ENCODE measurements at regions of chr1 and their contacts with region 1.

Region 1: GRCh38 chr1:65235867-65236805 is 73.2 kb upstream of the DNAJC6 start:
- DNase-seq: no peak
- ATAC-seq: peak; percentile 41
- H3K4me3 ChIP-seq: no peak overlapping the region
- H3K27ac ChIP-seq: no peak overlapping the region
- H3K4me1 ChIP-seq: no peaks in the 10 kb centered on the region
- H3K27me3 ChIP-seq: no peaks in the 10 kb centered on the region
- CTCF ChIP-seq: peak; percentile 41 to 63 (median 56); a peak in 5 of 6 replicates
- EP300 ChIP-seq: no peak
- POLR2A ChIP-seq: no peak
- RAD21 ChIP-seq: peak; percentile 72

Region 2: DNA sequence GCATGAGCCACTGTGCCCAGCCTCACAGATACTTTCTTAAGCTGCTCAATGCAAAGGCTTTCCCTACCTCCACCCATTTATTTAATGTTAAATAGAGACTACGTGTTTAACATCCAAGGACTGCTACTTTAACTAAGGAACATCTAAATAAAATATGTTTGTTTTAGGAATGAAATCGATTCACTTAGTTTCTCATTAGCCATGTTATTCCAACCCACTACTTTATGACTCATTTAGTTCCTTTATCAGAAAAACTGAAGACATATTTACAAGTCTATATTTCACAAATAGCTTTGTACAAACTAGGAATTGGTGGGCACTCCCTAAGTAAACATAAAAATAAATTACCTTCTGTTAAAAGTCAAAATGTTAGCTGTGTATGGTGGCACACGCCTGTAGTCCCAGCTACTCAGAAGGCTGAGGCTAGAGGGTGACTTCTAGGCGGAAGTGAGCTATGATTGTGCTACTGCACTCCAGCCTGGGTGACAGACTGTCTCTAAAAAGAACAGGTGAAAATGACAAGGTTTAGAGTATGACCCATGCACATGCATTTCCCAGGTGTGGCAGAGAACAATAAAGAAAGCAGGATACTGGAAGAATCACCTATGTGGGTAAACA is 128.0 kb before region 1 on chr1:
- CTCF ChIA-PET with region 1: no interaction called
- POLR2A ChIA-PET with region 1: no interaction called
- RAD21 ChIA-PET with region 1: no interaction called
- SMC1A ChIA-PET with region 1: no interaction called
- in situ Hi-C with region 1: no loop called
- intact Hi-C with region 1: no loop called
- DNase-seq: no peak
- ATAC-seq: no peak
- H3K4me3 ChIP-seq: no peak overlapping the region
- H3K27ac ChIP-seq: no peak overlapping the region
- H3K4me1 ChIP-seq: no peaks in the 10 kb centered on the region
- H3K27me3 ChIP-seq: peaks cover 0 to 3% of the 10 kb centered on the region in 2 experiments; a peak in 1 of 4 replicates
- CTCF ChIP-seq: no peak
- EP300 ChIP-seq: no peak
- POLR2A ChIP-seq: no peak
- RAD21 ChIP-seq: no peak

Region 3: DNA sequence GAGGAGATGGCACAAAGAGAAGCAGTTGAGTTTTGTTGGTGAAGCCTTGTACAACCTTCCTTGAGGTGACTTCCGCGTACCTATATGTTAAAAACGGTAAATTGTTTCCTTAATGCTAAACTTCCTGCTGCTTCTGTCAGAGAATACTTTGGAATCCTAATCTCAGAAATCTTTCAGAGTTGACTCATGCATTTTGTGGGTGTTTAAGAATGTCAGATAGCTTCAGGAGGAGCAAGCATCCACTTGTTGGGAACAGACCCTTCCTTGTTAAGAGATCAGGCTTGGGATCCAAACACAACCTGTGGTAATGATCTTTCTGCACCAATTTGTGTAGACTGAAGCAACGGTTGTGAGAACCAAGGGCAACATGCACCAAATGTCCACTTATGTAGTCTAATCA is 58.7 kb before region 1 on chr1:
- CTCF ChIA-PET with region 1: no interaction called
- POLR2A ChIA-PET with region 1: no interaction called
- RAD21 ChIA-PET with region 1: no interaction called
- SMC1A ChIA-PET with region 1: no interaction called
- in situ Hi-C with region 1: no loop called
- intact Hi-C with region 1: no loop called
- DNase-seq: no peak
- ATAC-seq: no peak
- H3K4me3 ChIP-seq: no peak overlapping the region
- H3K27ac ChIP-seq: no peak overlapping the region
- H3K4me1 ChIP-seq: peaks cover 31% of the 10 kb centered on the region
- H3K27me3 ChIP-seq: no peaks in the 10 kb centered on the region
- CTCF ChIP-seq: no peak
- EP300 ChIP-seq: no peak
- POLR2A ChIP-seq: no peak
- RAD21 ChIP-seq: no peak

Region 4: DNA sequence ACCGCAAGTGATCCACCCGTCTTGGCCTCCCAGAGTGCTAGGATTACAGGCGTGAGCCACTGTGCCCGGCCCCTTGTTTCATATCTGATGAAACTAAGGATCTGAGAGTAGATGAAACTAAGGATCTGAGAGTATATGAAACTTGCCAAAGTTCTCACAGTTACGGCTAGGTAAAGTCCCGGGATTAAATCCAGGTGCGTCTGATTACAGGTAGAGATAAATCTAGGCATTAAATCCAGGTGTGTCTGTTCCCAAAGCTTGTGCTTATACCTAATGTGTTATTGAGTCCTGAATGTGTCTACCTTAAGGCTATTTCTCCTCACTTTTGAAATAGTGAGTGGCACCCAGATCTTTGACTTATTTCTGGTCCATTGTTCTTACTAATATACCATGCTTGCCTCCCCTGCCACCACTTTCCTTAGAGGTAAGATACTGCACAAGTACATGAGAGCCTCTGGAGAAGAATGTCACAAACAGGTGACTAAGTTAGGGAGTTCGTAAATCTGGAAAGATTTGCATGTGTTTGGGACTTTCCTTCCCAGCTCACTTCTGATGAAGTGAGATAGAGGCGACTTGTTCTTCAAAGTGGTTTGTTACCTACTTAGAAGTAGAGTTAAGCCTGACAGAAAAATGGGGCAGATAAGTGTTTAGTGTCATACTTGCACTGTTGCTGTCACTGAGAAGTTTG is 21.7 kb before region 1 on chr1:
- CTCF ChIA-PET with region 1: interaction called, 17 read pairs
- POLR2A ChIA-PET with region 1: no interaction called
- RAD21 ChIA-PET with region 1: interaction called, 4 read pairs
- SMC1A ChIA-PET with region 1: interaction called, 7 read pairs
- in situ Hi-C with region 1: no loop called
- intact Hi-C with region 1: no loop called
- DNase-seq: no peak
- ATAC-seq: no peak; the same call in 2 of the 3 replicates
- H3K4me3 ChIP-seq: no peak overlapping the region
- H3K27ac ChIP-seq: no peak overlapping the region
- H3K4me1 ChIP-seq: peaks cover 15% of the 10 kb centered on the region
- H3K27me3 ChIP-seq: no peaks in the 10 kb centered on the region
- CTCF ChIP-seq: no peak
- EP300 ChIP-seq: no peak
- POLR2A ChIP-seq: no peak
- RAD21 ChIP-seq: no peak

Region 5: GRCh38 chr1:65247513-65248359 is 11.6 kb after region 1 on chr1:
- CTCF ChIA-PET with region 1: interaction called, 10 read pairs
- POLR2A ChIA-PET with region 1: no interaction called
- RAD21 ChIA-PET with region 1: interaction called, 3 read pairs
- SMC1A ChIA-PET with region 1: interaction called, 4 read pairs
- in situ Hi-C with region 1: no loop called
- intact Hi-C with region 1: no loop called
- DNase-seq: no peak
- ATAC-seq: no peak
- H3K4me3 ChIP-seq: no peak overlapping the region
- H3K27ac ChIP-seq: no peak overlapping the region
- H3K4me1 ChIP-seq: peaks cover 4% of the 10 kb centered on the region
- H3K27me3 ChIP-seq: no peaks in the 10 kb centered on the region
- CTCF ChIP-seq: no peak
- EP300 ChIP-seq: no peak
- POLR2A ChIP-seq: no peak
- RAD21 ChIP-seq: no peak

Region 6: GRCh38 chr1:65269612-65270011 is 33.5 kb after region 1 on chr1:
- CTCF ChIA-PET with region 1: interaction called, 14 read pairs
- POLR2A ChIA-PET with region 1: no interaction called
- RAD21 ChIA-PET with region 1: no interaction called
- SMC1A ChIA-PET with region 1: interaction called, 4 read pairs
- in situ Hi-C with region 1: no loop called
- intact Hi-C with region 1: no loop called
- DNase-seq: no peak
- ATAC-seq: no peak
- H3K4me3 ChIP-seq: no peak overlapping the region
- H3K27ac ChIP-seq: no peak overlapping the region
- H3K4me1 ChIP-seq: no peaks in the 10 kb centered on the region; the same call in 1 of the 2 replicates
- H3K27me3 ChIP-seq: peaks cover 0 to 2% of the 10 kb centered on the region in 2 experiments; a peak in 2 of 4 replicates
- CTCF ChIP-seq: 0 out of 6 replicates have a peak, but pooled peaks of 1 of the 3 experiments have one; percentile 5
- EP300 ChIP-seq: no peak
- POLR2A ChIP-seq: no peak
- RAD21 ChIP-seq: no peak

Region 7: GRCh38 chr1:65431111-65431705 is 195.1 kb after region 1 on chr1:
- CTCF ChIA-PET with region 1: interaction called, 11 read pairs
- POLR2A ChIA-PET with region 1: no interaction called
- RAD21 ChIA-PET with region 1: no interaction called
- SMC1A ChIA-PET with region 1: interaction called, 4 read pairs
- in situ Hi-C with region 1: no loop called
- intact Hi-C with region 1: loop called (anchors 10 kb)
- DNase-seq: no peak
- ATAC-seq: peak; percentile 73
- H3K4me3 ChIP-seq: no peak overlapping the region
- H3K27ac ChIP-seq: no peak overlapping the region
- H3K4me1 ChIP-seq: no peaks in the 10 kb centered on the region
- H3K27me3 ChIP-seq: no peaks in the 10 kb centered on the region
- CTCF ChIP-seq: peak; percentile 51 to 59 (median 53)
- EP300 ChIP-seq: no peak
- POLR2A ChIP-seq: no peak
- RAD21 ChIP-seq: peak; percentile 52

Region 8: DNA sequence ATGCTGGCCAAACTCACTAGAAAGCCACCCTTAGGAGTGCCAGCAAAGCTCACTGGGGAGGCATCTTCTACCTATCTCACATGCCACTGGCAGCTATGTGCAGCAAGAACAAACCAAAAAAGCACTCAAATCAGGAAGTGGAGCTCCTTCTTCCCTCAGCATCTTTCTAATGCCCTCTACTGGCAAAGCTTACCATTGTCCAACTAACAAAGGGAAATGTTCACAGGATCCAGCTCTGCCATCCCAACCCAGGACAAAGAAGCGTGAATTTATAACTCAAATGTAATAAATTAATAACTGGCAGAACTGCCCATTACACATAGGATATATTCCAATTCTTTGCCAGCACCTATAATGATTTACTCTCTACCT is 223.2 kb after region 1 on chr1:
- CTCF ChIA-PET with region 1: interaction called, 28 read pairs
- POLR2A ChIA-PET with region 1: no interaction called
- RAD21 ChIA-PET with region 1: interaction called, 10 read pairs
- SMC1A ChIA-PET with region 1: interaction called, 19 read pairs
- in situ Hi-C with region 1: no loop called
- intact Hi-C with region 1: loop called (anchors 5 kb)
- DNase-seq: peak; percentile 4
- ATAC-seq: peak; percentile 75
- H3K4me3 ChIP-seq: no peak overlapping the region
- H3K27ac ChIP-seq: no peak overlapping the region
- H3K4me1 ChIP-seq: no peaks in the 10 kb centered on the region
- H3K27me3 ChIP-seq: no peaks in the 10 kb centered on the region
- CTCF ChIP-seq: peak; percentile 53 to 66 (median 57); a peak in 5 of 6 replicates
- EP300 ChIP-seq: no peak
- POLR2A ChIP-seq: no peak
- RAD21 ChIP-seq: peak; percentile 54

Measured in GM12878 (cell line).